IMR-90 (cell line): ENCODE measurements at regions of chr9 and their contacts with region 1.

Region 1: GRCh38 chr9:122940603-122941559 is at the start of gene RABGAP1:
- DNase-seq: peak; percentile 97
- ATAC-seq: peak; percentile 98
- H3K4me3 ChIP-seq: peak within 1 kb of the TSS; percentile 92
- H3K27ac ChIP-seq: peak within 1 kb of the TSS; percentile 90
- H3K4me1 ChIP-seq: peaks cover 5% of the 10 kb centered on the region
- H3K27me3 ChIP-seq: no peaks in the 10 kb centered on the region
- CTCF ChIP-seq: no peak
- POLR2A ChIP-seq: peak; percentile 79
- RAD21 ChIP-seq: no peak
- total RNA-seq, gene RABGAP1: 39.7 and 53.9 TPM in 2 replicates

Region 2: DNA sequence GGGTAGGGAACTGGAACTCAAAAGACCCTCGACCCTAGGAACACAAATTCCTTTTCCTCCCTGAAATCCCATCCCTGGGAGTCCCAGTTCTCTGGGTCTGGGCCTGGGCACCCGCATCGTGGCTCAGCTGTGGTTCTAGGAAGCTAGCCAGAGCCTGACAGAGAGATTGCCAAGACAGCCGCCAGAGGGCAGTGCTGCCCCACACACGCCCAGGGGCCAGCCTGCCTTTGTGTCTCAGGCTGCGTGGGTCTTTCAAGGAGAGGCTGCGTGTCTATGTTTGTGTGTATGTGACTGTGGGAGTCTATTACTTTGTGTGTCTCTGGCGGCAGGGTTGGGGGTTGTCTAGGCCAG is 815.7 kb before region 1 on chr9:
- CTCF ChIA-PET with region 1: no interaction called
- POLR2A ChIA-PET with region 1: no interaction called
- dilution Hi-C with region 1: no loop called
- in situ Hi-C with region 1: no loop called
- intact Hi-C with region 1: no loop called
- DNase-seq: peak; percentile 76
- ATAC-seq: peak; percentile 79
- H3K4me3 ChIP-seq: no peak overlapping the region
- H3K27ac ChIP-seq: no peak overlapping the region
- H3K4me1 ChIP-seq: peaks cover 13% of the 10 kb centered on the region
- H3K27me3 ChIP-seq: no peaks in the 10 kb centered on the region; the same call in 1 of the 2 replicates
- CTCF ChIP-seq: peak; percentile 99
- POLR2A ChIP-seq: peak; percentile 70; the same call in 1 of the 2 replicates
- RAD21 ChIP-seq: peak; percentile 99

Region 3: GRCh38 chr9:122904823-122905710 is 35.8 kb before region 1 on chr9 and contains the start of gene RC3H2:
- CTCF ChIA-PET with region 1: no interaction called
- POLR2A ChIA-PET with region 1: interaction called, 3 read pairs
- dilution Hi-C with region 1: no loop called
- in situ Hi-C with region 1: no loop called
- intact Hi-C with region 1: loop called (anchors 2 kb)
- DNase-seq: peak; percentile 100
- ATAC-seq: peak; percentile 95
- H3K4me3 ChIP-seq: peak within 1 kb of the TSS; percentile 99
- H3K27ac ChIP-seq: peak within 1 kb of the TSS; percentile 95
- H3K4me1 ChIP-seq: 0 out of 2 replicates have a peak, but pooled peaks cover 2% of the 10 kb centered on the region
- H3K27me3 ChIP-seq: no peaks in the 10 kb centered on the region
- CTCF ChIP-seq: no peak
- POLR2A ChIP-seq: peak; percentile 83
- RAD21 ChIP-seq: no peak
- total RNA-seq, gene RC3H2: 55.5 and 58.4 TPM in 2 replicates